ENCODE measurements at regions of chr3 and their contacts with region 1.

Region 1: GRCh38 chr3:51498876-51499738 is 708 bp downstream of the DCAF1 start:
- DNase-seq: peak; percentile 58 to 91 (median 74)
- ATAC-seq: peak; percentile 52
- H3K4me3 ChIP-seq: peak overlapping the region; percentile 96
- H3K4me3 Mint-ChIP-seq: peak overlapping the region; percentile 94
- H3K27ac ChIP-seq: peak overlapping the region; percentile 91 to 96
- H3K27ac Mint-ChIP-seq: peak overlapping the region; percentile 86
- H3K4me1 ChIP-seq: peaks cover 34% of the 10 kb centered on the region
- H3K4me1 Mint-ChIP-seq: peaks cover 29% of the 10 kb centered on the region
- H3K27me3 ChIP-seq: no peaks in the 10 kb centered on the region
- H3K27me3 Mint-ChIP-seq: no peaks in the 10 kb centered on the region
- CTCF ChIP-seq: no peak

Region 2: DNA sequence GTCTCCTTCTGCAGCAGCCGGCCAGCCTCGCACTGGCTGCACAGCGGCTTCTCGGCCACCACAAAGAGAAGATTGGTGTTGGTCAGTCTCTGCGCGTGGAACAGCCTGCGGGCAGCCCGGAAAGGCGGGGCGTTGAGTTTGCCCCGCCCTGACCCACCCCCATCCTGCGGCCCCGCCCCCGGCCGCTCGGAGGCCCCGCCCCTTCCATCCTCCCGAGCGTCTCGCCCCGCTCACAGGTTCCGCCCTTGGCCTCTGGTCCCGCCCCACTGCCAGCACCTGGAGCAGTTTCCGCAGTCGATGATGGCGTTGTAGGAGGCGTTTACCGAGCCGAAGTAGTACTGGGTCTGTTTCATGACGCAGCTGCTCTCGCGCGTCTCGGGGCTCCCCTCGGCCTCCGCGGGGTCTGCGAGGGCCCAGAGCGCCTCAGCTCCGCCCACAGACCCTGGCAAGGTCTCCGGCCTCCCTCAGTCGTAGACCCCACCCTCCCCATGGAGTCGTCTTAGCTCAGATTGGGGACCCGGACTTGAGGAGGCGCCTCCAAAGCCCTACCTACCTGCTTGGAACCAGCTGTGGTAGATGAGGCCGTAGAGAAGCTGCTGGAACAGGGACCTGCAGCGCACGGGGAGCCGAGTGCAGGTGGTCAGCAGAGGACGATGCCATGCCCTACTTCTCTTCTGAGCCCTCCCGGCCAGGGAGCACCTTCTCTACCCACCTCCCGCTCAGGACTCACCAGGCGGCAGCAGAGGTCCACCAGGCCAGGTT is 1133.8 kb before region 1 on chr3:
- CTCF ChIA-PET with region 1: no interaction called
- POLR2A ChIA-PET with region 1: interaction called, 4 read pairs
- intact Hi-C with region 1: loop called in 1 of 2 experiments (anchors 5 kb)
- DNase-seq: peak; percentile 92 to 97 (median 95)
- ATAC-seq: peak; percentile 95
- H3K4me3 ChIP-seq: peak overlapping the region; percentile 73
- H3K4me3 Mint-ChIP-seq: peak overlapping the region; percentile 94
- H3K27ac ChIP-seq: peak overlapping the region; percentile 69 to 81
- H3K27ac Mint-ChIP-seq: peak overlapping the region; percentile 98
- H3K4me1 ChIP-seq: peaks cover 30% of the 10 kb centered on the region
- H3K4me1 Mint-ChIP-seq: peaks cover 25% of the 10 kb centered on the region
- H3K27me3 ChIP-seq: no peaks in the 10 kb centered on the region
- H3K27me3 Mint-ChIP-seq: no peaks in the 10 kb centered on the region
- CTCF ChIP-seq: no peak

Region 3: GRCh38 chr3:51384726-51385473 is 114.2 kb before region 1 on chr3 and contains the start of gene MANF:
- CTCF ChIA-PET with region 1: interaction called, 12 read pairs
- POLR2A ChIA-PET with region 1: interaction called, 29 read pairs
- intact Hi-C with region 1: loop called in 1 of 2 experiments (anchors 2 kb)
- DNase-seq: peak; percentile 93 to 99 (median 95)
- ATAC-seq: peak; percentile 95
- H3K4me3 ChIP-seq: peak within 1 kb of the TSS; percentile 99
- H3K4me3 Mint-ChIP-seq: peak within 1 kb of the TSS; percentile 99
- H3K27ac ChIP-seq: peak within 1 kb of the TSS; percentile 84 to 96
- H3K27ac Mint-ChIP-seq: peak within 1 kb of the TSS; percentile 99
- H3K4me1 ChIP-seq: peaks cover 47% of the 10 kb centered on the region
- H3K4me1 Mint-ChIP-seq: peaks cover 55% of the 10 kb centered on the region
- H3K27me3 ChIP-seq: no peaks in the 10 kb centered on the region
- H3K27me3 Mint-ChIP-seq: no peaks in the 10 kb centered on the region
- CTCF ChIP-seq: no peak
- total RNA-seq, gene MANF: 26.4 to 30.2 TPM

Region 4: GRCh38 chr3:51538459-51539290 is 39.6 kb after region 1 on chr3 and contains the start of gene RAD54L2:
- CTCF ChIA-PET with region 1: interaction called, 6 read pairs
- POLR2A ChIA-PET with region 1: interaction called, 10 read pairs
- intact Hi-C with region 1: loop called (anchors 2 kb)
- DNase-seq: peak; percentile 44 to 90 (median 72)
- ATAC-seq: peak; percentile 91
- H3K4me3 ChIP-seq: peak within 1 kb of the TSS; percentile 87
- H3K4me3 Mint-ChIP-seq: peak within 1 kb of the TSS; percentile 98
- H3K27ac ChIP-seq: peak within 1 kb of the TSS; percentile 34 to 65
- H3K27ac Mint-ChIP-seq: peak within 1 kb of the TSS; percentile 89
- H3K4me1 ChIP-seq: peaks cover 27% of the 10 kb centered on the region
- H3K4me1 Mint-ChIP-seq: peaks cover 45% of the 10 kb centered on the region
- H3K27me3 ChIP-seq: no peaks in the 10 kb centered on the region
- H3K27me3 Mint-ChIP-seq: no peaks in the 10 kb centered on the region
- CTCF ChIP-seq: no peak
- total RNA-seq, gene RAD54L2: 39.9 to 41.7 TPM

Region 5: GRCh38 chr3:51637144-51637940 is 138.2 kb after region 1 on chr3:
- CTCF ChIA-PET with region 1: no interaction called
- POLR2A ChIA-PET with region 1: no interaction called
- intact Hi-C with region 1: no loop called
- DNase-seq: no peak
- ATAC-seq: no peak
- H3K4me3 ChIP-seq: no peak overlapping the region
- H3K4me3 Mint-ChIP-seq: no peak overlapping the region
- H3K27ac ChIP-seq: no peak overlapping the region
- H3K27ac Mint-ChIP-seq: no peak overlapping the region
- H3K4me1 ChIP-seq: no peaks in the 10 kb centered on the region
- H3K4me1 Mint-ChIP-seq: no peaks in the 10 kb centered on the region
- H3K27me3 ChIP-seq: no peaks in the 10 kb centered on the region
- H3K27me3 Mint-ChIP-seq: no peaks in the 10 kb centered on the region
- CTCF ChIP-seq: no peak

Region 6: GRCh38 chr3:51682079-51682478 is 183.0 kb after region 1 on chr3:
- CTCF ChIA-PET with region 1: interaction called, 67 read pairs
- POLR2A ChIA-PET with region 1: interaction called, 58 read pairs
- intact Hi-C with region 1: loop called (anchors 1 kb)
- DNase-seq: peak; percentile 59 to 93 (median 64)
- ATAC-seq: peak; percentile 80
- H3K4me3 ChIP-seq: peak overlapping the region; percentile 14
- H3K4me3 Mint-ChIP-seq: peak overlapping the region; percentile 47
- H3K27ac ChIP-seq: peak overlapping the region in 1 of 2 donors; percentile 32
- H3K27ac Mint-ChIP-seq: peak overlapping the region; percentile 51
- H3K4me1 ChIP-seq: peaks cover 100% of the 10 kb centered on the region
- H3K4me1 Mint-ChIP-seq: peaks cover 84% of the 10 kb centered on the region
- H3K27me3 ChIP-seq: no peaks in the 10 kb centered on the region
- H3K27me3 Mint-ChIP-seq: no peaks in the 10 kb centered on the region
- CTCF ChIP-seq: peak; percentile 90

Region 7: DNA sequence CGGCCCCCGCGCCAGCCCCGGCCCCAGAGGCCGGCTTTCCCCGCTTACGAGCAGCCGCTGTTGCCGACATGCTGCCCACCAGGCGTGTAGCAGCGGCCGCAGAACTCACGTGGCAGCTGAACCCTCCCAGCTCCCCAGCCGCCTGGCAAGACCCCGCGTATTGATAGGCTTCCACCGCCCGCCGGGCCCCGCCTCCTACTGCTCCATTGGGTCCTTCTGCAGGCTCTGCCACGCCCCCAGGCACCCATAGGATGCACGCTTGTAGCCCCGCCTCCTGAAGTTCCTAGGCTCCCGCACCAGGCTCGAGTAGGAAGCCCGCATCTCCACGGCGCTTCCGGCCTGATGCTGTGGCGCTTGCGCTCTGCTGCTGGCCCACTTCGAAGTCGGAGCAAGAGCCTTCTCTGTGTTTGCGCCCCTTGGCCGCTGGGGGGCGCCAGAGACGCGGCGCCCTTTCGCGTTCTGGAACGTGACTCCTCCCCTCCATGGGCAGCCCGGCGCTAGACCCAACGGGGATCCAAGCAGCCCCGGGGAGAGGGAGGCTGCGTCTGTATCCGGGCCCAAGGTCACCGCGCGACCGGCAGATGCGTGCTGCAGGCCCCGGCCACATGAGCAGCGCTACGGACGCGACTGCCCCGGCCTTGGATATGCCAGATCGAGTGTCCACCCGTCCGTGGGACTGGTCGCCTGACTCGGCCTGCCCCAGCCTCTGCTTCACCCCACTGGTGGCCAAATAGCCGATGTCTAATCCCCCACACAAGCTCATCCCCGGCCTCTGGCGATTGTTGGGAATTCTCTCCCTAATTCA is 442.9 kb after region 1 on chr3 and contains the starts of genes PARP3 and RRP9:
- CTCF ChIA-PET with region 1: no interaction called
- POLR2A ChIA-PET with region 1: no interaction called
- intact Hi-C with region 1: loop called in 1 of 2 experiments (anchors 5 kb)
- DNase-seq: peak; percentile 97 to 100 (median 99)
- ATAC-seq: peak; percentile 92
- H3K4me3 ChIP-seq: peak within 1 kb of the TSS; percentile 89
- H3K4me3 Mint-ChIP-seq: peak within 1 kb of the TSS; percentile 95
- H3K27ac ChIP-seq: peak within 1 kb of the TSS; percentile 39 to 71
- H3K27ac Mint-ChIP-seq: peak within 1 kb of the TSS; percentile 81
- H3K4me1 ChIP-seq: peaks cover 32% of the 10 kb centered on the region
- H3K4me1 Mint-ChIP-seq: peaks cover 36% of the 10 kb centered on the region
- H3K27me3 ChIP-seq: no peaks in the 10 kb centered on the region
- H3K27me3 Mint-ChIP-seq: no peaks in the 10 kb centered on the region
- CTCF ChIP-seq: peak; percentile 95
- total RNA-seq, gene PARP3: 5.8 to 6.4 TPM
- total RNA-seq, gene RRP9: 6.4 to 7.6 TPM

Region 8: GRCh38 chr3:52685709-52686691 is 1186.9 kb after region 1 on chr3 and contains the starts of genes GNL3 and PBRM1:
- CTCF ChIA-PET with region 1: no interaction called
- POLR2A ChIA-PET with region 1: no interaction called
- intact Hi-C with region 1: loop called in 1 of 2 experiments (anchors 5 kb)
- DNase-seq: peak; percentile 84 to 98 (median 89)
- ATAC-seq: peak; percentile 85
- H3K4me3 ChIP-seq: peak within 1 kb of the TSS; percentile 81
- H3K4me3 Mint-ChIP-seq: peak within 1 kb of the TSS; percentile 100
- H3K27ac ChIP-seq: peak within 1 kb of the TSS; percentile 85 to 93
- H3K27ac Mint-ChIP-seq: peak within 1 kb of the TSS; percentile 97
- H3K4me1 ChIP-seq: peaks cover 21% of the 10 kb centered on the region
- H3K4me1 Mint-ChIP-seq: peaks cover 57% of the 10 kb centered on the region
- H3K27me3 ChIP-seq: no peaks in the 10 kb centered on the region
- H3K27me3 Mint-ChIP-seq: no peaks in the 10 kb centered on the region
- CTCF ChIP-seq: no peak
- total RNA-seq, gene GNL3: 104 to 106 TPM
- total RNA-seq, gene PBRM1: 47.6 to 48.1 TPM